ENCODE measurements at regions of chr5 and their contacts with region 1.

Region 1: DNA sequence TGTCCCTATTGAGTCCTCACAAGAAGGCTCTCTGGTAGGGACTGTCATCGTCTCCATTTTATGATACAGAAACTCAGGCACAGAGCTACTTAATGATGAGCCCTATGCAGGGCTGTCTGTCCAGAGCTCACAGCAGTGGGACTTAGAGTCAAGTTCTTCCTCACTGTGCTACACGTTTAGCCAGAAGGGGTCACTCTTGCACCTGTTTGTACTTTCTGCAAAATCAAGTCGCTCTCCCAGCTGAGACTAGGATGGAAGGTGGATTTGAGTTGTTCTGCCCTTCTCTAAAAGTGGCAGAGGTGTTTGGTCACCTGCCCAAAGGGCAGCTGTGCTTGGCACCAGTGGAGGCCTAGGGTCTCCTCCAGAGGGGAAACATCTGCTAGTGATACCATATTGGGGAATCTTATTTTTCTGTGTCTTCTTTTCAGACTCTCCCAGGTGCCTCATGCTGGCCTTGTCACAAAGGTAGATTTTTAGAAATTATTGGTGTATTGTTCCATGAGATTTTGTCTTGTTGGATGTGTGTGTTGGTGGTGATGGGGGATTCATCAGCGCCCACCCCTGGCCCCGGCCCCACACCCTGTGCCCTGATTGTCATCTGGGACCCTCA is 104.2 kb downstream of the PPARGC1B start:
- DNase-seq: peak in 8 of 9 donors; percentile 29 to 63 (median 42)
- ATAC-seq: peak; percentile 68
- H3K4me3 ChIP-seq: no peak overlapping the region
- H3K4me3 Mint-ChIP-seq: no peak overlapping the region
- H3K27ac ChIP-seq: no peak overlapping the region
- H3K27ac Mint-ChIP-seq: no peak overlapping the region
- H3K4me1 ChIP-seq: no peaks in the 10 kb centered on the region
- H3K4me1 Mint-ChIP-seq: peaks cover 0 to 9% (median 0%) of the 10 kb centered on the region in 7 donors
- H3K27me3 ChIP-seq: no peaks in the 10 kb centered on the region
- H3K27me3 Mint-ChIP-seq: no peaks in the 10 kb centered on the region

Region 2: DNA sequence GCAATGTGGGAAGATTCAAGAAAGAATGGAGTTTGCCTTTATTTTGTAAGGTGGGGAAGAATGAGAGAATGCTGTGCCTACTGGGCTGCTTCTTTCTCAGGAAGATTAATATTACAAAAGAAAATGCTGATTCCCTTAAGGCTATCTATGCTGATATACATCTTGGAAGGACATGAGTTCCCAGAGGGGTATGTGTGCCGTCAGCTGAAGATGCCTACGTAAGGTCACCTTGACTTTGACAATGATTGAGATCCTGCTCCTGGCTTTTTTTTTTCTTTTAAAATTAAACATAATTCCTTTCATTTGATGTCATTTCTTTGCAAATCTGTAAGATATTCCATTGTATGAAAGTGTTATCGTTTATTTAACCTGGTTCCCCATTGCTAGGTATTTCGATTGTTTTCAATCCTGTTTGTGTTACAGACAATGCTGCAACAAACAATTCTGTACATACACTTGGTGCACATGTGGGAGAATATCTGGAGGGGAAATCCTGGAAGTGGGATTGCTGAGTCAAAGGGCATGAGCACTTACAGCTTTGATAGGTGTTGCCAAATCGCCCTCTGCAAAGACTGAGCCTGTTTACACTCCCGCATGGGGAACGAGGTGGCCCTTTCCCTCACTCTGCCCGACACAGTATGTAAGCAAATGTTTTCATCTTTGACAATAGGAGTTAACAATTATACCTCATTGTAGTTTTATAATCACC is 43.8 kb after region 1 on chr5:
- CTCF ChIA-PET with region 1: no interaction called
- POLR2A ChIA-PET with region 1: no interaction called
- intact Hi-C with region 1: no loop called
- DNase-seq: no peak
- ATAC-seq: no peak
- H3K4me3 ChIP-seq: no peak overlapping the region
- H3K4me3 Mint-ChIP-seq: no peak overlapping the region
- H3K27ac ChIP-seq: no peak overlapping the region
- H3K27ac Mint-ChIP-seq: no peak overlapping the region
- H3K4me1 ChIP-seq: no peaks in the 10 kb centered on the region
- H3K4me1 Mint-ChIP-seq: no peaks in the 10 kb centered on the region
- H3K27me3 ChIP-seq: no peaks in the 10 kb centered on the region
- H3K27me3 Mint-ChIP-seq: peaks cover 5 to 14% (median 7%) of the 10 kb centered on the region in 5 donors

Region 3: DNA sequence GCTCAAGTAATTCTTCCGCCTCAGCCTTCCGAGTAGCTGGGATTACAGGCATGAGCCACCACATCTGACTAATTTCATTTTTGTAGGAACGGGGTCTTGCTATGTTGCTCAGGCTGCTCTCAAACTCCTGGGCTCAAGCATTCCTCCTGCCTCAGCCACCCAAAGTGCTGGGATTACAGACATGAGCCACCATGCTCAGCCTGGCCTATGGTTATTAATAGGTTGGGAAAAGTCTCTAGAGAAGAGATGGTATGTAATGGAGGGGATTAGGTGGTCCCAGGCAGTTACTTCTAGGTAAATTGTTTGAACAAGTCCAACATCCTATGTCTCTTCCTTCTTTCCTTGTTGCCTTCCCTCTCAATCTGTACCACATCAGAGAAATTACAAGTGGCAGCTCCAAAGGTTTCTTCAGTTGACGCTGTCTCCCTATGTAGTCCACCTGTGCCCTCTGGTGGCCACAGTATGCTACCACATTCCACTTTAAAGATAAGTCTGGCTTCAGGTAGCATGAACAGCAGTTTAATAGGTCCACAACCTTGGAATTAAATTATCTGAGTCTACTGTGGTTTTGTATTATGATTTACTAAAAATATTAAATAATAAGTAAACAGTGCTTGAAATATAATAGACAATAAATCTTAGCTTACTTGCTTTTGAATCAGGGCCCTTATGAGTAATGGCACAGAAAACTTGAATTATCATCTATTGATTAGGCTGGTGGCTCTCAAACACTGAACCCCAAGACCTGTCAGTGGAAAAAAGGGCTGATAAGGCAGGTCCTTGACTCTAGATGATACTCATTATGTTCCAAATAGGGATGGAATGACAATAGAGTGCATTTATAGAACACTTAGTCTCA is 156.4 kb after region 1 on chr5:
- CTCF ChIA-PET with region 1: interaction called, 93 read pairs
- POLR2A ChIA-PET with region 1: no interaction called
- intact Hi-C with region 1: loop called in 1 of 2 experiments (anchors 1 kb)
- DNase-seq: peak; percentile 28 to 65 (median 57)
- ATAC-seq: peak; percentile 98
- H3K4me3 ChIP-seq: no peak overlapping the region
- H3K4me3 Mint-ChIP-seq: no peak overlapping the region
- H3K27ac ChIP-seq: no peak overlapping the region
- H3K27ac Mint-ChIP-seq: no peak overlapping the region
- H3K4me1 ChIP-seq: no peaks in the 10 kb centered on the region
- H3K4me1 Mint-ChIP-seq: no peaks in the 10 kb centered on the region
- H3K27me3 ChIP-seq: no peaks in the 10 kb centered on the region
- H3K27me3 Mint-ChIP-seq: no peaks in the 10 kb centered on the region

Region 4: DNA sequence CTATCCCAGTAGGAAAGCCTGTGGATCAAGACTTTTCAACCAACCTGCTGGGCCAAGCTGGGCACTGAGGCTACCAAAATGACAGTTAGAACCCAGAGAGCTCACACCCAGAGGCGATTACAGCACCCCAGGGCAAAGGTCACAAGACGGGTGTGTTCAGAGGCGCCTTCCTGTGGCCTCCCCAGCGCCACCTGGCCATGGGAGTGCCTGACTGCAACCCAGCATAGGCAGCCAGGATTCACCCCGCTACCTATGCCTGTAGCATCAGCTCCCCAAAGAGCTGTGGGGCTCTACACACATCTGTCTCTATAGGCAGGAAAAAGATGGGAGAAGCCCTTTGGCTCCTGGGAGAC is 287.8 kb after region 1 on chr5:
- CTCF ChIA-PET with region 1: no interaction called
- POLR2A ChIA-PET with region 1: no interaction called
- intact Hi-C with region 1: loop called in 1 of 2 experiments (anchors 5 kb)
- DNase-seq: no peak
- ATAC-seq: peak; percentile 61
- H3K4me3 ChIP-seq: no peak overlapping the region
- H3K4me3 Mint-ChIP-seq: no peak overlapping the region
- H3K27ac ChIP-seq: no peak overlapping the region
- H3K27ac Mint-ChIP-seq: peak overlapping the region in 1 of 9 donors; percentile 35
- H3K4me1 ChIP-seq: no peaks in the 10 kb centered on the region
- H3K4me1 Mint-ChIP-seq: peaks cover 0 to 5% (median 0%) of the 10 kb centered on the region in 7 donors
- H3K27me3 ChIP-seq: no peaks in the 10 kb centered on the region
- H3K27me3 Mint-ChIP-seq: no peaks in the 10 kb centered on the region